ENCODE measurements at regions of chr21 and their contacts with region 1.

Region 1: DNA sequence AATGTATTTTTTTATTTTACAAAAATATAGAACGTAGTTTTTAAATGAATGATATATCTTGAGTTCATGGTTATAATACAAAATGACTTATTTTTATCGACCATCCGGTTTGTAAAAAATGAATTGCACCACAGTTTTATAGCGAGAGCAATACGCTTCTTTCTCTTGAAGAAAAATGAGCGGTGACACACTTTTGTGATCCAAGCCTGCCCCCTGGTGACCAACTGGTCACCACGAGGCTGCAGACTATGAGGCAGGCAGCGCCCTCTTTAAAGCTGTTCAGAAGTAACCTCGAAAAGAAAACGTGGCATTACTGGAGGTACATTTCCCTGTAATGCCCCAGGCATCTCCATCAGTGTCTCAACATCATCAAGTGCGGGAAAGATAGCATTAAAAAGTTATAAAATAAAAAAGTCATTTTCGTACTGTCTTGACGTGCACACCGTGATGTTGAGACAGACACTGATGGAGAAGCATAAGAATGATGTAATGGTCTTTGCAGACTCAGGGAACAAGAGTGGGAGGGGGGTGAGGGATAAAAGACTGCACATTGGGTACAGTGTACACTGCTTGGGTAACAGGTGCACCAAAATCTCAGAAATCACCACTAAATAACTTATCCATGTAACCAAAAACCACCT is 734.2 kb upstream of the ADAMTS5 start:
- DNase-seq: peak; percentile 47 to 78
- ATAC-seq: peak; percentile 94 to 97
- H3K4me3 ChIP-seq: peak overlapping the region in 1 of 4 donors; percentile 6
- H3K27ac ChIP-seq: no peak overlapping the region
- H3K4me1 ChIP-seq: peaks cover 0 to 7% of the 10 kb centered on the region in 2 donors
- H3K27me3 ChIP-seq: no peaks in the 10 kb centered on the region
- CTCF ChIP-seq: peak; percentile 83 to 87 (median 86)
- POLR2A ChIP-seq: no peak

Region 2: GRCh38 chr21:26769613-26770188 is 931.4 kb before region 1 on chr21:
- in situ Hi-C with region 1: loop called in 1 of 4 experiments (anchors 10 kb)
- intact Hi-C with region 1: loop called (anchors 10 kb)
- DNase-seq: no peak
- ATAC-seq: no peak
- H3K4me3 ChIP-seq: no peak overlapping the region
- H3K27ac ChIP-seq: no peak overlapping the region
- H3K4me1 ChIP-seq: peaks cover 0 to 5% of the 10 kb centered on the region in 2 donors
- H3K27me3 ChIP-seq: no peaks in the 10 kb centered on the region
- CTCF ChIP-seq: peak in 4 of 5 experiments; percentile 39 to 68 (median 49)
- POLR2A ChIP-seq: no peak

Region 3: DNA sequence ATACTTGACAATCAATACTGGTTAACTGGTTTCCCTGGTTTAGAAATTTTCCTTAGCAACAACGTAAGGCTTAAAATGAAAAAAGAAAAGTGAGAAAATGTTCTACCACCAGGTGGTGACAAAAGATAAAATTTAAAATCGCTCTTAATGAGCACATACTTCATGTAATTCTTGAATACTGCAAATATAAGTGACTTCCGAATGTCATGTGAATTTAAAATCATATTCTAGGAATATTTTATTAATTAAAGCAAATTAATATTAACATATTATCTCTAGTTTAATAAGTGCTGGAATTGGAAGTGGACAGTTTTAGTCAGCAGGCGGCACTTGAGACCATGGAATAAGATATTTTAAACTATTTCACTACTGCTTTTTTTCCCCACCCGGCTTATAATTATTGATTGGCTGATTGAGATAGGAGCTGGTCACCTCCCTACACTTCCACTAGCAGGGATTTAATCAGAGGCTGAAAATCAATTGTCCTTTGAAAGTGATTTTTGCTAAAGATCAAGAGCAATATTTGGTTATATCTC is 850.9 kb before region 1 on chr21:
- in situ Hi-C with region 1: loop called (anchors 5 kb)
- intact Hi-C with region 1: loop called (anchors 1 kb)
- DNase-seq: no peak
- ATAC-seq: no peak
- H3K4me3 ChIP-seq: peak overlapping the region in 3 of 4 donors; percentile 9 to 28 (median 15)
- H3K27ac ChIP-seq: no peak overlapping the region
- H3K4me1 ChIP-seq: no peaks in the 10 kb centered on the region
- H3K27me3 ChIP-seq: no peaks in the 10 kb centered on the region
- CTCF ChIP-seq: peak; percentile 64 to 87 (median 67)
- POLR2A ChIP-seq: no peak

Measured in gastrocnemius medialis (tissue), 4 donors.